MCF 10A (cell line): ENCODE measurements at regions of chr2 and their contacts with region 1.

Region 1: DNA sequence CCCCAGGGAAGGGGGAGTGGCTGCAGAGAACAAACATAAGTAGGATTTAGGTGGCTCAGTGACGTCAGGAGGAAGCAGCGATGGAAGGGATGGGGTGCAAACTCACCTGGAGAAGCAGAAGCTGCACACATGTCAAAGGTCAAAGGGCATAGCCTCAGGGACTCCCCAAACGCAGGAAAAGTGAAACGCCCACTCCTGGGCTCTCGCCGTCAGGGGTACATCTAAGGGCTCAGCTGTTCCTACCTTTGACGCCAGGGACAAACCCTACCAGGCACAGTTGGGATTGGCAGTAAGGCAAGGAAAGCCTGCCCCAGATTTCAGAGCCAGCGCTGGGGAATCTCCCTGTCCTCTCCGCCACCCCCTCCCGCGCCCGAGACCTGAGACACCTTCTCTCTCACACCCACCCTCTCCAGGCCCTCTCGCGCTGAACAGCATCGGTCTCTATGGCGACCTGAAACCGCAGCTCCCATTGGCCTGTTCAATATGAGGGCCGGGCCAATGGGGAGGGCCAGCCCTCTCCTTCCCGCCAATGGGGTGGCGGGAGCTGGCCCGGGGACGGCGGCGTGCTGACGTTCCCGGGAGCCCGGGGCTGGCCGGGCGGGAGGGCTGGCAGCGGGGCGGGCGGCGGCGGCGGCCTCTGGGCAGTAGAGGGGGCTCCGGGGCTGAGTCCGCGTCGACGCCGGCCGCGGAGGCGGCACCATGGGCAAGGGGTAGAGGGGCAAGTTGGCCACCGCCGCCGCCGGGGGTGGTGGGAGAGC is at the starts of genes CCDC148 and PKP4:
- DNase-seq: peak; percentile 95
- H3K4me3 Mint-ChIP-seq: peak within 1 kb of the TSS; percentile 84
- H3K27ac Mint-ChIP-seq: peak within 1 kb of the TSS; percentile 94
- H3K4me1 Mint-ChIP-seq: peaks cover 15% of the 10 kb centered on the region
- H3K27me3 Mint-ChIP-seq: no peaks in the 10 kb centered on the region
- CTCF ChIP-seq: no peak
- total RNA-seq, gene CCDC148: 0.51 and 0.96 TPM in 2 replicates
- total RNA-seq, gene PKP4: 62.3 and 63.7 TPM in 2 replicates

Region 2: GRCh38 chr2:157559061-157559460 is 897.4 kb before region 1 on chr2:
- CTCF ChIA-PET with region 1: no interaction called
- POLR2A ChIA-PET with region 1: no interaction called
- intact Hi-C with region 1: no loop called
- DNase-seq: no peak
- H3K4me3 Mint-ChIP-seq: no peak overlapping the region
- H3K27ac Mint-ChIP-seq: no peak overlapping the region
- H3K4me1 Mint-ChIP-seq: no peaks in the 10 kb centered on the region
- H3K27me3 Mint-ChIP-seq: no peaks in the 10 kb centered on the region
- CTCF ChIP-seq: no peak

Region 3: DNA sequence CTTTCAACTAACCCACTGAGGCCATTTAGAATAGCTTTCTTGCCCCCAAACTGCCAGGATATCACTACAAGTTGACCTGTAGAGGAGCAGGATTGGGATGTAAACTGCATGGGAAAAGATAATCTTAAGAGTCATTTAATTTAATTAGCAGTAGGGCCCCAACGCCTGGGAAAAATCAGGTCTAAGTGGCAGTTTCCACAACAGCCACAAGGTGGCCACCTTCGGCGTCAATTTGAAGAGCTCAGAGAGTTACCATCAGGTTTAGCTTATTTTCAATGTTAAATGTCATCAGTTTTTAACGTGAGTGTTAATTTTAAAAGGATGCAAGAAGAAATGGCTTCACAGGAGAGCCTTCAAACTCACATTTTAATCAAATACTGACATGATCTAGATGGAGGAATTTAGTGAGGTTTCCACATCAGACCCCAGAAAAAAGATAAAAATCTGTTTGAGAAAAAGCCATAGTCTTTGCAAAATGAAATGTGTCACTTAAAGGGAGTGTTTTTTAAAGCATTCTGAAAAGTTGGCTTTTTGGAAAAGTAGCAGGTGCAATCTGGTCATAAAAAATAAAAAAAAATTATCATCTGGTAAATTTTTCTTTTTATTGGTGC is 432.1 kb before region 1 on chr2:
- CTCF ChIA-PET with region 1: interaction called, 13 read pairs
- POLR2A ChIA-PET with region 1: interaction called, 3 read pairs
- intact Hi-C with region 1: no loop called
- DNase-seq: peak; percentile 64
- H3K4me3 Mint-ChIP-seq: no peak overlapping the region
- H3K27ac Mint-ChIP-seq: no peak overlapping the region
- H3K4me1 Mint-ChIP-seq: no peaks in the 10 kb centered on the region
- H3K27me3 Mint-ChIP-seq: no peaks in the 10 kb centered on the region
- CTCF ChIP-seq: peak; percentile 73

Region 4: DNA sequence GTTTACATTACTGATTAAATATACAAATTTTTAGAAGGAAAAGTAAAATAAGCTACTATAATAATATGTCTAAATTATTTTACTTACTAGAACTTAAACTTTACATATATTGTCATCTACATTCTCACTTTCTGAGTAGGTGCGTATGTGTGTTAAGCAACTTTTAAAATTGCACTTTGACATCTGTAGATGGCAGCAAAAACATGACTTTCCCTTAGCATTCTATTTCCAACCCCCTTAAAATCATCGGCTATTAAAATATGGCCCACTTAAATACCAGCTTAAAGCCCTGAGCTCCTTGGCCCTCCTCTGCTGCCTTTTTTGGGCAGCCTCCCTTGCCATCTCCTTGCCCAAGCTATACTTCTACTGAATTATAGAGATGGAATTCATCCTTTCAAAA is 276.8 kb before region 1 on chr2:
- CTCF ChIA-PET with region 1: interaction called, 8 read pairs
- POLR2A ChIA-PET with region 1: no interaction called
- intact Hi-C with region 1: loop called (anchors 2 kb)
- DNase-seq: peak; percentile 26
- H3K4me3 Mint-ChIP-seq: no peak overlapping the region
- H3K27ac Mint-ChIP-seq: no peak overlapping the region
- H3K4me1 Mint-ChIP-seq: no peaks in the 10 kb centered on the region
- H3K27me3 Mint-ChIP-seq: peaks cover 19% of the 10 kb centered on the region
- CTCF ChIP-seq: peak; percentile 37

Region 5: GRCh38 chr2:158416156-158416555 is 40.3 kb before region 1 on chr2:
- CTCF ChIA-PET with region 1: no interaction called
- POLR2A ChIA-PET with region 1: no interaction called
- intact Hi-C with region 1: no loop called
- DNase-seq: no peak
- H3K4me3 Mint-ChIP-seq: no peak overlapping the region
- H3K27ac Mint-ChIP-seq: no peak overlapping the region
- H3K4me1 Mint-ChIP-seq: no peaks in the 10 kb centered on the region
- H3K27me3 Mint-ChIP-seq: no peaks in the 10 kb centered on the region
- CTCF ChIP-seq: no peak

Region 6: GRCh38 chr2:158432117-158432516 is 24.4 kb before region 1 on chr2:
- CTCF ChIA-PET with region 1: no interaction called
- POLR2A ChIA-PET with region 1: no interaction called
- intact Hi-C with region 1: no loop called
- DNase-seq: no peak
- H3K4me3 Mint-ChIP-seq: no peak overlapping the region
- H3K27ac Mint-ChIP-seq: no peak overlapping the region
- H3K4me1 Mint-ChIP-seq: no peaks in the 10 kb centered on the region
- H3K27me3 Mint-ChIP-seq: no peaks in the 10 kb centered on the region
- CTCF ChIP-seq: no peak

Region 7: GRCh38 chr2:158473719-158474392 is 17.4 kb after region 1 on chr2:
- CTCF ChIA-PET with region 1: interaction called, 6 read pairs
- POLR2A ChIA-PET with region 1: interaction called, 12 read pairs
- intact Hi-C with region 1: no loop called
- DNase-seq: no peak
- H3K4me3 Mint-ChIP-seq: no peak overlapping the region
- H3K27ac Mint-ChIP-seq: no peak overlapping the region
- H3K4me1 Mint-ChIP-seq: no peaks in the 10 kb centered on the region
- H3K27me3 Mint-ChIP-seq: no peaks in the 10 kb centered on the region
- CTCF ChIP-seq: no peak

Region 8: DNA sequence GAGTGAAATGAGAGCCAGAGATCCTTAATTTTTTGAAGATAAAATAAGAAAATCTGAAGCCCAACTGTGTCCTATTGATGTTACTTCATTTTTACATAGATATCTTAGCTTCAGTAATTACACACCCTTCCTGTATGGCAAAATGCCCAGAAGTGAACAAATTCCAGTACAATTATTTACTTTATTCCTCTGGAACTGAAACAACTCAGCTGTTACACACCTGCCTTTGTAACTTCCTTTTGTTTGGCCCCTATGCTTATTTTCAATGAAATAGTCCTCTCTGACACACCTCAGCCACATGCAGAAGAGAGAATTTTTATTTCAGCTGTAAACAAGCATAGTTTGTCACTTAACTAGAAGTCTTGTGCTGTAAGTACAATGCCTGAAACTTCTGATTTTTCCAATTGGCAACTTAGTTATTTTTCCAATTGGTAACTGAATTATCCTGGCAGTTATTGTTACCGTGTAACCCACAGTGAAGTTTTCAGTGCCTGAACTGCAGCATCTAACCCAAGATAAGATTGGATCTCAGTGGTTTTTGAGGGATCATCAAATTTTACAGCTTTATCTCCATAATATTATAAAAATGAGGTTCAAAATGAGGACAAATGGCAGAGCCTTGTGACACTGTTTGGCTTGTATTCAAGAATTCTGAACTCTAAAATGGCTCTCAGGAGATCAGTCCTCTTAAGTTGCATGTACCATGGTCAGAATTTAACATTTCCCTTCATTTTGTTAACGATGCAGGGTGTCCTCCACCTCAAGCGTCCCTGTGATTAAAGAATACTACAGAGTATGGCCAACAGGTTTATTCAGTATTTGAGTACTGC is 82.9 kb after region 1 on chr2:
- CTCF ChIA-PET with region 1: no interaction called
- POLR2A ChIA-PET with region 1: interaction called, 11 read pairs
- intact Hi-C with region 1: loop called (anchors 2 kb)
- DNase-seq: peak; percentile 89
- H3K4me3 Mint-ChIP-seq: no peak overlapping the region
- H3K27ac Mint-ChIP-seq: peak overlapping the region; percentile 69
- H3K4me1 Mint-ChIP-seq: peaks cover 8% of the 10 kb centered on the region
- H3K27me3 Mint-ChIP-seq: no peaks in the 10 kb centered on the region
- CTCF ChIP-seq: no peak

Region 9: DNA sequence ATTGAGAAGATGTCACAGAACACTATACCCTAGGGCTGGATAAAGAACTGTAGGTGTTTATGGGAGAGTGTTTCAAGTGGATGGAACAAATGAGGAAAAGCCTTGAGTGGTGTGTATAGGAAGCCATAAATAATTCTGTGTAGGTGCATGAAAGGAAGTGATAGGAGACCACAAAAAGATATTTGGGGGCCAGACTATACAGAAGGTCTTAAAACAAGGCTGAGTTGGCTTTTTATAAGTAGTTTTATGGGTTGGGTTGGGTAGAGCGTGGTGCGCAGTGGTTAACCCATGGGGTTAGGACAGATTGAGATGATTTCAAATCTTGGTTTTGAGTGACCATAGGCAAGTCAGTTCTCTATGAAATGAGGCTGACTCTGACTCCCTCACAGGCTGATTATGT is 110.7 kb after region 1 on chr2:
- CTCF ChIA-PET with region 1: no interaction called
- POLR2A ChIA-PET with region 1: no interaction called
- intact Hi-C with region 1: no loop called
- DNase-seq: no peak
- H3K4me3 Mint-ChIP-seq: no peak overlapping the region
- H3K27ac Mint-ChIP-seq: peak overlapping the region; percentile 28
- H3K4me1 Mint-ChIP-seq: no peaks in the 10 kb centered on the region
- H3K27me3 Mint-ChIP-seq: no peaks in the 10 kb centered on the region
- CTCF ChIP-seq: no peak

Region 10: DNA sequence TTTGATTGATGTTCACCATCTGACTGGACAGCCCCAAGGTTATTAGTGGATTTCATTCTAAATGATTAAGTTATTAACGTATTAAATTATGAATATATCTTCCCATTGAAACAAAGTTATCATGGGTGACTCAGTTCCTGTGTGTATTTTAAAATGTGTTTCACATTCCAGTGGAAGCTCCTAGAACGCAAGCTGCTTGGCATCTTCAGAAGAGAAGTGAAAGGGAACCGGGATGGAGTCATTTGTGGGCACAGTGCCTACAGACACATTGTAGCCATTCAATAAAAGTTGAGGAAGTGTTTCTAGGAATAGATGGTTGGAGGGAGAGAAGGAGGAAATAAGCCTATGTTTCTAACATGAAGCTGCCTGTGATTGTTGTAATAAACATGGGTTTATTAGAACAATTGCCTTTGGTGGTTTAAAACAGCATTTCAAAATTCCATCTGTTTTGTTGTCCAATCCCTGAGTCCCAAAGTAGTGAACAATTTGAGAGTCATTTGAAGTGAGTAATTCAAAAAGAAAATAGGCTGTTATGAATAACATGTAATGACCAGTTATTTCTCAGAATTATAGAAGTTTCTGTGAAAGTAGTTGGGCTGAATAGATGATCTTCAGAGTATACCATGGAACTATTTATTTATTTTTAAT is 143.8 kb after region 1 on chr2:
- CTCF ChIA-PET with region 1: interaction called, 3 read pairs
- POLR2A ChIA-PET with region 1: interaction called, 3 read pairs
- intact Hi-C with region 1: loop called (anchors 1 kb)
- DNase-seq: peak; percentile 89
- H3K4me3 Mint-ChIP-seq: no peak overlapping the region
- H3K27ac Mint-ChIP-seq: no peak overlapping the region
- H3K4me1 Mint-ChIP-seq: peaks cover 13% of the 10 kb centered on the region
- H3K27me3 Mint-ChIP-seq: no peaks in the 10 kb centered on the region
- CTCF ChIP-seq: no peak

Region 11: DNA sequence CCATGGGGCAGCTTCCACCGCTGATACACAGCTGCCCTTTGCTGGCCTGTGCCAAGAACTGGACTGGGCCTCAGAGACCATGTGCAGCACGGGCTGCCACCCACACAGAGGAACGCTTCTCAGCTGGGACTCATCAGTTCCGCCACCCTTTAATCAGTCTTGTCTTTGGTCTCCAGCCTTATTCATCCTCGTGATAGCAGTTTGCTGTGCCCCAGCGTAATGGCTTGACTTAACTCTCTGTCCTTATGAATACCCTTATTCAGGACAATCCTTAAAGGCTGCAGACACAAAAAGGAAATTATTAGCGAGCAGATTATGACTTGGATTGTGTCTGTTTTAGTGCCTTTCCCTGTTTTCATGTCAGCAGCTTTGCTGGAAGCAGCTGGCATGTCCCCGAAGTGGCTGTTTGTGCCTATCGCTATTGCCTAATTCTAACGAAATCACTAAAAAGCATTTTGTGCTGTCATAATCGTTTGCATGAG is 229.8 kb after region 1 on chr2:
- CTCF ChIA-PET with region 1: no interaction called
- POLR2A ChIA-PET with region 1: no interaction called
- intact Hi-C with region 1: loop called (anchors 5 kb)
- DNase-seq: no peak
- H3K4me3 Mint-ChIP-seq: no peak overlapping the region
- H3K27ac Mint-ChIP-seq: no peak overlapping the region
- H3K4me1 Mint-ChIP-seq: peaks cover 7% of the 10 kb centered on the region
- H3K27me3 Mint-ChIP-seq: no peaks in the 10 kb centered on the region
- CTCF ChIP-seq: no peak